Cardiac septum (tissue), 1 donor: ENCODE measurements at regions of chr10 and their contacts with region 1.

Region 1: DNA sequence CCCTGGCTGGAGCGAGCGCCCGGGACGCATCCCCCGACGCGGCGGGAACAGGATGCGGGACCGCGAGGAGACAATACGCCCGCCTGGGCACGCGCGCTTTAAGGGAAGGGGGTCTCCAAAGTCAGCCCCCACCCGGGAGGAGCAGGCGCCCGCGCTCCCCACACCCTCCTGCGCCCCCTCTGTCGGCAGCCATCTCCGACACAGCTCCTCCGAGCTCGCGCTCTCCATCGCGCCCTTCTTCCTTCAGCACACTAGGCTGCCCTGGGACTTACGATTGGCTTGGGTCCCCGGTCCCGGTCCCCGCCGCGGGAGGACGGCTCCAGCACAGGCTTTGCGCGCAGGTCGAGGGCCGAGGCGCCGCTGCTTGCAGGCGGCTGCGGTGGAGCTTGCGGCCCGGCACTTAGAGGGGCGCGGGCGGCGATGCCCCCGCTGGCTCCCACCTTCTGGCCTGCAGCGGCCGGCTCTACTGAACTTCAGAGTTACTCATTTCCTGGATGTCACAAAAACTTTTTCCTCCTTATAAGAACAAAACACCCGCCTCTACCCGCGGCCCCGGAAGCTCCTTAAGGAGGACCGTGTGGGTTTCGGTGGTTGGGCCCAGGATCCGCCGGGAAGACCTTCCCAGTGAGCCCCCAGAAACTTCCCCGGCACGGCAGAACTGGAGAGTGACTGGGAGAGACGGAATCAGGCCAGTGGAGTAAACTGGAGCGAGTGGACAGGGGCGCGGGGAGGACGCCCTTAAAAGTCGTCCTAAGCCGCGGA is at the start of gene ITPRIP:
- DNase-seq: peak; percentile 91
- total RNA-seq, gene ITPRIP: 25.4 TPM

Region 2: GRCh38 chr10:104300736-104301292 is 37.3 kb before region 1 on chr10:
- intact Hi-C with region 1: loop called (anchors 2 kb)
- DNase-seq: peak; percentile 87

Region 3: DNA sequence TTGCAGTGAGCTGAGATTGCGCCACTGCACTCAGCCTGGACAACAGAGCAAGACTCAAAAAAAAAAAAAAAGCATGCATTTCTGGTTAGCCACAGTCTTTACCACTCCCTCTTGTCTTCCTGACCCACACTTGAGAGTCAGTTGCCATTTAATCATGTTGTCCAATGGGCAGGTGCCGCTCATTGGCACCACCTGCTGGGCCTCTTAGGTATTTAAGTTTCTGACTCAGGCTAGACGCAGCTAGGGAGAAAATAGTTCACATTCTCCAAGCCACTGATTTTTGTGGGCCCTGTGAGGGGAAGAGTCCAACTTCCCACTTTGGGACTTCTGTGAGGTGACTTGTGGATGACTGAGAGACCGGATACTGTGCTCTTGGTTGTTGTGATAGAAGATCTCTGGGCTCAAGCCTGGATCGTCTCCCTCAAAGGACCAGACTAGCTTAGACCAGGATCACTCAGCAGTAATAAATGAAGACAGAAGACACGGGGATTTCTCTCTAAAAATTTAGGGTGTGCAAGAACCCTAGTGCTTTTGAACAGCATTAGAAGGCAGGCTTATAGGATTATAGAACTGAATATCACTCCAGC is 276.2 kb after region 1 on chr10:
- intact Hi-C with region 1: no loop called
- DNase-seq: no peak